ENCODE measurements at regions of chr10 and their contacts with region 1.

Region 1: GRCh38 chr10:118568327-118568848 is 27.1 kb downstream of the PRLHR start:
- DNase-seq: peak; percentile 79
- H3K4me3 Mint-ChIP-seq: no peak overlapping the region
- H3K27ac Mint-ChIP-seq: no peak overlapping the region
- H3K4me1 Mint-ChIP-seq: peaks cover 30% of the 10 kb centered on the region
- H3K27me3 Mint-ChIP-seq: no peaks in the 10 kb centered on the region
- CTCF ChIP-seq: peak; percentile 83

Region 2: GRCh38 chr10:118596426-118597124 is 28.2 kb after region 1 on chr10:
- CTCF ChIA-PET with region 1: interaction called, 10 read pairs
- POLR2A ChIA-PET with region 1: no interaction called
- intact Hi-C with region 1: no loop called
- DNase-seq: no peak
- H3K4me3 Mint-ChIP-seq: no peak overlapping the region
- H3K27ac Mint-ChIP-seq: no peak overlapping the region
- H3K4me1 Mint-ChIP-seq: no peaks in the 10 kb centered on the region
- H3K27me3 Mint-ChIP-seq: peaks cover 84% of the 10 kb centered on the region
- CTCF ChIP-seq: no peak

Region 3: GRCh38 chr10:118720685-118721538 is 152.5 kb after region 1 on chr10:
- CTCF ChIA-PET with region 1: interaction called, 161 read pairs
- POLR2A ChIA-PET with region 1: interaction called, 6 read pairs
- intact Hi-C with region 1: loop called (anchors 1 kb)
- DNase-seq: peak; percentile 72
- H3K4me3 Mint-ChIP-seq: no peak overlapping the region
- H3K27ac Mint-ChIP-seq: no peak overlapping the region
- H3K4me1 Mint-ChIP-seq: peaks cover 8% of the 10 kb centered on the region
- H3K27me3 Mint-ChIP-seq: no peaks in the 10 kb centered on the region
- CTCF ChIP-seq: peak; percentile 56

Region 4: GRCh38 chr10:118800920-118801319 is 232.5 kb after region 1 on chr10:
- CTCF ChIA-PET with region 1: interaction called, 68 read pairs
- POLR2A ChIA-PET with region 1: interaction called, 3 read pairs
- intact Hi-C with region 1: loop called (anchors 1 kb)
- DNase-seq: peak; percentile 55
- H3K4me3 Mint-ChIP-seq: no peak overlapping the region
- H3K27ac Mint-ChIP-seq: no peak overlapping the region
- H3K4me1 Mint-ChIP-seq: peaks cover 29% of the 10 kb centered on the region
- H3K27me3 Mint-ChIP-seq: no peaks in the 10 kb centered on the region
- CTCF ChIP-seq: peak; percentile 69

Region 5: DNA sequence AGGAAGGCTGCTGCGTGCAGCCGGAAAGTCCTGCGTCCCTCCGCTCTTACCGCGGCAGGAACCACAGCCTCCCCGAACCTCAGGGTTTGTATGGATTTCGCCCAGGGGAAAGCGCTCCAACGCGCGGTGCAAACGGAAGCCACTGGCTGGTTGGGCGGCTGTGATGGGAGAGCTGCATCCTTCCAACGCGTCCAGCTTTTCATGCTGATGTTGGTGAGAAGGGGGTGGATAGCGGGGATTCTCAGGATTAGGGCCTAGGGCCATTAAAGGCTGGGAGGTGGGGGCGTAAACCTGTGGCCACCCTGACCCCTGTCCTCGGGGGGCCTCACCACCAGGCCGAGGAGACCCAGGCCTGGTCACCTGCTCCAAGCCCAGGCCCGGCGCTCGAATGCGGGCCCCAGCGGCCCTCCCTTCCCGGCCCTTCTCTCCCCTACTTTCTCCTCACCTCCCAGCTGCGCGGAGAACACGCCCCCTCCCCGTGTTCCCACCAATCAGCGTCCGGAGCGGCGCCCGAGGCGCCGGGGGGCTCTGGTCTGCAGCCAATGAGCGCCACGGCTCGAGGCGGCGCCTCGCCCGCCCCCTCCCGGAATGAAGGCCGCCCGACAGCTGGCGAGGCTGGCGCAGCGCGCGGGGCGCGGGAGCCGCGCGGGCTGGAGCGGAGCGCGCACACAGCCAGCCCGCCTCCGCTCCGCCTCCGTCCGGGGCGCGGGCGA is 460.7 kb after region 1 on chr10:
- CTCF ChIA-PET with region 1: interaction called, 8 read pairs
- POLR2A ChIA-PET with region 1: interaction called, 6 read pairs
- intact Hi-C with region 1: loop called (anchors 5 kb)
- DNase-seq: peak; percentile 72
- H3K4me3 Mint-ChIP-seq: peak overlapping the region; percentile 52
- H3K27ac Mint-ChIP-seq: no peak overlapping the region
- H3K4me1 Mint-ChIP-seq: peaks cover 38% of the 10 kb centered on the region
- H3K27me3 Mint-ChIP-seq: no peaks in the 10 kb centered on the region
- CTCF ChIP-seq: peak; percentile 8

Measured in MCF 10A (cell line).